BJ (cell line): ENCODE measurements at regions of chr1 and their contacts with region 1.

Region 1: GRCh38 chr1:147890177-147890790 is 12.3 kb upstream of the GJA8 start:
- DNase-seq: no peak
- H3K4me3 ChIP-seq: no peak overlapping the region
- H3K27me3 ChIP-seq: no peaks in the 10 kb centered on the region
- CTCF ChIP-seq: peak; percentile 45

Region 2: DNA sequence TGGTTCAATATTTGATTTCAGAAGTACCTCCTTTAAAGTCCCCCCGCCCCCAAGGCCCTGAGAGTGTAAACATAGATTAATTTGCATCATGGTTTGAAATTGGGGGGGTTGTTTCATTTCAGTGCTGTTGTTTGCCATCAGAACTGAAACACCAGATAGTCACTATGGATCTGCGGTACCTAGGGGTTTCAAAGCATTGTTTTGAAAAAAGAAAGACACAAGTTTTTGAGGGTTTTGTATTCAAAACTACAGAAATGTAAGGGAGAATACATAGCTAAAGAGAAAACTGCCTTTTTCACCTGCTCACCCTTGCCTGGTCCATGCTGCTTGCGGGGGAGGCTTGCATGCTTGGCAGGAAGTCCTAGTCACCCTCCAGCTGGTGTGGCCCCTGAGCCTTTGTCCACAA is 279.3 kb before region 1 on chr1:
- CTCF ChIA-PET with region 1: no interaction called
- POLR2A ChIA-PET with region 1: no interaction called
- DNase-seq: no peak
- H3K4me3 ChIP-seq: no peak overlapping the region
- H3K27me3 ChIP-seq: no peaks in the 10 kb centered on the region
- CTCF ChIP-seq: no peak

Region 3: DNA sequence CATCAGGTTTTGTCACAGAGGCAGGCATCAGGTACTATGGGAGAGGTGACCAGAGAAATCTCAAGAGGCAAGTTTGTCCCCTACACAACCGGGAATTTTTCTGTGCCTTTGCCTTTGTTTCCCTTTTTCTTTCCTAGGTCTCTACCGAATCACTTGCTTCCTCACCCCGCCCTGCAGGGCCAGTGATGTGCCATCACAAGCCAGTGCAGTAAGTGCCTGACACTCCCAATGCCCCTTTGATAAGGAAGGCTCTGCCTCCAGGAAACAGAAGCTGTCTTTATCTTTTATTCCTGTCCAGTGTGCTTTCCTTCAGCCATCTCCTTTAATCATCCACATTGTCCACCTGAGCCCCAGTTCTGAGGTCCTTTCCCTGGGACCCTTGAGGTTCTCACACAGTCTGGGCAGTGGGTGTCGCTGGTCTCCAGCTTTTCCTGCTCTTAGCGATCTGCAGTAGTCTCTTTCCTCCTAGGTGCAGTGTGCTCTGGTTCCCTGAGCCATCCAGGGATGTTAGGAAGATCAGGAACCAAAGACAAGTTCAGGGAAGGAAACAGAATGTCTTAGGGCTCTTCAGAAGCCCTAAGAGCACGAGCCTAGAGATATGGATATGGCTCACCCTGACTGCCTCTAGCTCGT is 166.5 kb before region 1 on chr1:
- CTCF ChIA-PET with region 1: interaction called, 34 read pairs
- POLR2A ChIA-PET with region 1: no interaction called
- DNase-seq: no peak
- H3K4me3 ChIP-seq: no peak overlapping the region
- H3K27me3 ChIP-seq: peaks cover 3% of the 10 kb centered on the region; the same call in 1 of the 2 replicates
- CTCF ChIP-seq: peak; percentile 44

Region 4: GRCh38 chr1:147868953-147869352 is 21.3 kb before region 1 on chr1:
- CTCF ChIA-PET with region 1: interaction called, 10 read pairs
- POLR2A ChIA-PET with region 1: no interaction called
- DNase-seq: no peak
- H3K4me3 ChIP-seq: no peak overlapping the region
- H3K27me3 ChIP-seq: no peaks in the 10 kb centered on the region
- CTCF ChIP-seq: no peak

Region 5: DNA sequence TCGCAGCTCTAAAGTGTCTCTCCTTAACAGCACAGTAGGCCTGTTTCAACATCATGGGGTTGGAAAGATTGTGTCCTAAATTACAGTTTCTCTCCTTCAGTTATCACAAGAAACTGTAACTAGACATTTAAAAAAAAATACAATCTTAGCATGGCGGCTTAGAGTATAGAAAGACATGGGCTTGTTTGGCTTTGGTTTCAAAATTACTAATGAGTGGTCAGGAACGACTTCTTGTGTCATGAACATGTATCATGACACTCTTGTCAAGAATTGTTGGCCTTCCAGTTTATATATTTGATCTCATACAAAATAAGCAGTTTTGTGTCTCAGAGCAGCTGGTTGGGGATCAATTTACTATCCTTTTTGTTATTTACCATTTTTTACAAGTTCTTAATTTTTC is 14.4 kb after region 1 on chr1:
- CTCF ChIA-PET with region 1: interaction called, 20 read pairs
- POLR2A ChIA-PET with region 1: no interaction called
- DNase-seq: no peak
- H3K4me3 ChIP-seq: no peak overlapping the region
- H3K27me3 ChIP-seq: no peaks in the 10 kb centered on the region; the same call in 1 of the 2 replicates
- CTCF ChIP-seq: no peak